CD4-positive, alpha-beta T cell (primary cell): ENCODE measurements at regions of chr13 and their contacts with region 1.

Region 1: DNA sequence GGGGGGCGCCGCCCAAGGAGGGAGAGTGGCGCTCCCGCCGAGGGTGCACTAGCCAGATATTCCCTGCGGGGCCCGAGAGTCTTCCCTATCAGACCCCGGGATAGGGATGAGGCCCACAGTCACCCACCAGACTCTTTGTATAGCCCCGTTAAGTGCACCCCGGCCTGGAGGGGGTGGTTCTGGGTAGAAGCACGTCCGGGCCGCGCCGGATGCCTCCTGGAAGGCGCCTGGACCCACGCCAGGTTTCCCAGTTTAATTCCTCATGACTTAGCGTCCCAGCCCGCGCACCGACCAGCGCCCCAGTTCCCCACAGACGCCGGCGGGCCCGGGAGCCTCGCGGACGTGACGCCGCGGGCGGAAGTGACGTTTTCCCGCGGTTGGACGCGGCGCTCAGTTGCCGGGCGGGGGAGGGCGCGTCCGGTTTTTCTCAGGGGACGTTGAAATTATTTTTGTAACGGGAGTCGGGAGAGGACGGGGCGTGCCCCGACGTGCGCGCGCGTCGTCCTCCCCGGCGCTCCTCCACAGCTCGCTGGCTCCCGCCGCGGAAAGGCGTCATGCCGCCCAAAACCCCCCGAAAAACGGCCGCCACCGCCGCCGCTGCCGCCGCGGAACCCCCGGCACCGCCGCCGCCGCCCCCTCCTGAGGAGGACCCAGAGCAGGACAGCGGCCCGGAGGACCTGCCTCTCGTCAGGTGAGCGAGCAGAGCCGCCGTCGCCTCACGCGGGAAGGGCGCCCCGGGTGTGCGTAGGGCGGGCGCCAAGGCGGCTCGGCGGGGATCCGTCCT is at the start of gene RB1:
- DNase-seq: peak; percentile 77 to 97 (median 85)
- ATAC-seq: peak; percentile 72
- H3K4me3 ChIP-seq: peak within 1 kb of the TSS; percentile 95
- H3K4me3 Mint-ChIP-seq: peak within 1 kb of the TSS; percentile 92
- H3K27ac ChIP-seq: peak within 1 kb of the TSS; percentile 97 to 98
- H3K27ac Mint-ChIP-seq: peak within 1 kb of the TSS; percentile 97
- H3K4me1 ChIP-seq: peaks cover 18% of the 10 kb centered on the region
- H3K4me1 Mint-ChIP-seq: peaks cover 45% of the 10 kb centered on the region
- H3K27me3 ChIP-seq: no peaks in the 10 kb centered on the region
- H3K27me3 Mint-ChIP-seq: no peaks in the 10 kb centered on the region
- CTCF ChIP-seq: no peak
- total RNA-seq, gene RB1: 14.9 to 18.4 TPM

Region 2: DNA sequence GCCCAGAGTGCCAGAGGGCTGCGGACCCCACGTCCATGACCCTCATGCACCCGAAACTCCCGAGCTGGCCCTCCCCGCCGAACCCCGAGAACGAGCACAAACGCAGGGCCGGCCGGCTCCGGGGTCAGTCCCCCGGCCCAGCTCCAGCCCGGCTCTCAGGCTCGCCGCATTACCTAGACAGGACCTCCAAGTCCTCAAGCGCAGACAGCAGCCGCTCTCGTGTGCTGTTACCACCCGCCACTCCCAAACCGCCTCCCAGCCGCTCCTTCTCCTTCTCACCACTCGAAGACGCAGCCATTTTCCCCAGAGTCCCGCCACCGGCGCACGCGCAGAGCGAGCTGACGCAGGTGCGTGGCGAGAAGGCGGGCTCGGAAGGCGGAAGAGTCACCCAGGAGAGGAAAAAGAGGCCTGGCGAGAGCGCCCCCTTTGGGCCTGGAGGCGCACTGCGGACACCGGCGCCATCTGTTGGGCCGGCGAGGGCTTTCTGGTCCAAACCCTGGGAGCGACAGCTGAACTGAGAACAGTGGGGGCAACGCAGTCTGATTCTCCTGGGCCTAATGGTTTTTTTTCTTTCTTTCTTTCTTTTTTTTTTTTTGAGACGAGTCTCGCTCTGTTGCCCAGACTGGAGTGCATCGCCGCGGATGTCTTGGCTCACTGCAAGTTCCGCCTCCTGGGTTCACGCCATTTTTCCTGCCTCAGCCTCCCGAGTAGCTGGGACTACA is 208.6 kb before region 1 on chr13 and contains the start of gene MED4:
- CTCF ChIA-PET with region 1: interaction called, 15 read pairs
- POLR2A ChIA-PET with region 1: interaction called, 9 read pairs
- intact Hi-C with region 1: loop called in 1 of 2 experiments (anchors 2 kb)
- DNase-seq: peak; percentile 95 to 99 (median 97)
- ATAC-seq: peak; percentile 98
- H3K4me3 ChIP-seq: peak within 1 kb of the TSS; percentile 85
- H3K4me3 Mint-ChIP-seq: peak within 1 kb of the TSS; percentile 100
- H3K27ac ChIP-seq: peak within 1 kb of the TSS; percentile 84 to 89
- H3K27ac Mint-ChIP-seq: peak within 1 kb of the TSS; percentile 95
- H3K4me1 ChIP-seq: peaks cover 23% of the 10 kb centered on the region
- H3K4me1 Mint-ChIP-seq: peaks cover 53% of the 10 kb centered on the region
- H3K27me3 ChIP-seq: no peaks in the 10 kb centered on the region
- H3K27me3 Mint-ChIP-seq: no peaks in the 10 kb centered on the region
- CTCF ChIP-seq: peak; percentile 99
- total RNA-seq, gene MED4: 48.9 to 56.1 TPM

Region 3: GRCh38 chr13:48126944-48127830 is 176.4 kb before region 1 on chr13:
- CTCF ChIA-PET with region 1: no interaction called
- POLR2A ChIA-PET with region 1: interaction called, 3 read pairs
- intact Hi-C with region 1: loop called in 1 of 2 experiments (anchors 5 kb)
- DNase-seq: peak; percentile 6 to 84 (median 32)
- ATAC-seq: peak; percentile 93
- H3K4me3 ChIP-seq: no peak overlapping the region
- H3K4me3 Mint-ChIP-seq: peak overlapping the region; percentile 23
- H3K27ac ChIP-seq: peak overlapping the region; percentile 61 to 73
- H3K27ac Mint-ChIP-seq: peak overlapping the region; percentile 91
- H3K4me1 ChIP-seq: peaks cover 11% of the 10 kb centered on the region
- H3K4me1 Mint-ChIP-seq: peaks cover 33% of the 10 kb centered on the region
- H3K27me3 ChIP-seq: no peaks in the 10 kb centered on the region
- H3K27me3 Mint-ChIP-seq: no peaks in the 10 kb centered on the region
- CTCF ChIP-seq: peak; percentile 81

Region 4: GRCh38 chr13:48184260-48184659 is 119.3 kb before region 1 on chr13:
- CTCF ChIA-PET with region 1: no interaction called
- POLR2A ChIA-PET with region 1: interaction called, 11 read pairs
- intact Hi-C with region 1: no loop called
- DNase-seq: no peak
- ATAC-seq: no peak
- H3K4me3 ChIP-seq: no peak overlapping the region
- H3K4me3 Mint-ChIP-seq: peak overlapping the region; percentile 43
- H3K27ac ChIP-seq: peak overlapping the region in 1 of 2 donors; percentile 19
- H3K27ac Mint-ChIP-seq: peak overlapping the region; percentile 89
- H3K4me1 ChIP-seq: peaks cover 45% of the 10 kb centered on the region
- H3K4me1 Mint-ChIP-seq: peaks cover 68% of the 10 kb centered on the region
- H3K27me3 ChIP-seq: no peaks in the 10 kb centered on the region
- H3K27me3 Mint-ChIP-seq: no peaks in the 10 kb centered on the region
- CTCF ChIP-seq: no peak

Region 5: DNA sequence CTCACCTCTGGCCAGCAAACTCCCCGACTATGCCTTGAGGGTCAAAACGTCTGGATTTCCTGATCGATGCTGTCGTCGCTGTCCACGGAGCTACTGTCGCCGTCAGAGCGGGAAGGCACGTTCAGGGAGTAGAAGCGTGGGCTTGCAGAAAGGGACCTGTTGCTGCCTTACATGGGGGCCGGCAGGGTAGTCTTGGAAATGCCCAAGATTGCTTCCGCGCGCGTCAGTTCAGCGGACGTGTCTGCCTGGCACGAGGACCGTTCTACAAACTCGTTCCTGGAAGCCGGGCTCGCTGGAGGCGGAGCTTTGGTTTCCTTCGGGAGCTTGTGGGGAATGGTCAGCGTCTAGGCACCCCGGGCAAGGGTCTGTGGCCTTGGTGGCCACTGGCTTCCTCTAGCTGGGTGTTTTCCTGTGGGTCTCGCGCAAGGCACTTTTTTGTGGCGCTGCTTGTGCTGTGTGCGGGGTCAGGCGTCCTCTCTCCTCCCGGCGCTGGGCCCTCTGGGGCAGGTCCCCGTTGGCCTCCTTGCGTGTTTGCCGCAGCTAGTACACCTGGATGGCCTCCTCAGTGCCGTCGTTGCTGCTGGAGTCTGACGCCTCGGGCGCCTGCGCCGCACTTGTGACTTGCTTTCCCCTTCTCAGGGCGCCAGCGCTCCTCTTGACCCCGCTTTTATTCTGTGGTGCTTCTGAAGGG is 15.4 kb after region 1 on chr13:
- CTCF ChIA-PET with region 1: interaction called, 3 read pairs
- POLR2A ChIA-PET with region 1: interaction called, 18 read pairs
- intact Hi-C with region 1: loop called in 1 of 2 experiments (anchors 2 kb)
- DNase-seq: peak in 7 of 14 experiments; percentile 3 to 60 (median 31)
- ATAC-seq: peak; percentile 55
- H3K4me3 ChIP-seq: peak overlapping the region; percentile 55
- H3K4me3 Mint-ChIP-seq: peak overlapping the region; percentile 88
- H3K27ac ChIP-seq: peak overlapping the region in 1 of 2 donors; percentile 21
- H3K27ac Mint-ChIP-seq: peak overlapping the region; percentile 74
- H3K4me1 ChIP-seq: peaks cover 28% of the 10 kb centered on the region
- H3K4me1 Mint-ChIP-seq: peaks cover 37% of the 10 kb centered on the region
- H3K27me3 ChIP-seq: no peaks in the 10 kb centered on the region
- H3K27me3 Mint-ChIP-seq: peaks cover 4% of the 10 kb centered on the region
- CTCF ChIP-seq: no peak